A549 (cell line): ENCODE measurements at regions of chr3 and their contacts with region 1.

Region 1: DNA sequence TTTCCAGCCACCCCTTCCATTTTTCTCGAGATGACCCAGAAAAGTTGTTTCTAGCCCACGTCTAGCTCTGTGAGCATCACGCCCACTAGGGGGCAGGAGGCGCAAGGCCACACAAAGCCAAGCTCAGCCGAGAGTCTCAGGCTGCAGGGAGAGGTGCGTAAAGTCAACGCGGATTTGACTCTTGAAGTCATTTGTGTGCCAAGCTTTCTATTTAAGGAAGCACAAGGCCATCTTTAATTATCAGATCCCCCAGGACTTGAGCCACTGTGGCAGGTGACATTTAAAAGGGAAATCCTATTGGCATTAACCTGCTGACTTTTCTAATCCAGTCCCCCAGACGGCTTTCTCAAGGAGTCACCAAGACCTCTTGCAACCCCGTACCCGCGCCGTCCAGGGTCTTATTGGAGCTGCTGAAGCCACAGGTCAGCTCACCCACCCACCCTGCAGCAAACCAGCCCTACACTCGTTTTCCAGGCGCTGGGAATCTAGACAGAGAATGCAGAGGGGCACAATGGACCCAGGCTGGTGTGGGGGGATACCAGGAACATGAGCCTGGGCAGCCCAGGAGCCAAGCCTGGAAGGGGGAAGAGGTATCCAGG is 62.1 kb downstream of the CAPN7 start:
- DNase-seq: peak; percentile 80 to 87
- ATAC-seq: peak; percentile 70 to 86
- H3K4me3 ChIP-seq: no peak overlapping the region
- H3K27ac ChIP-seq: peak overlapping the region in 1 of 2 experiments; percentile 85; a peak in 3 of 6 replicates
- H3K4me1 ChIP-seq: peaks cover 21% of the 10 kb centered on the region
- CTCF ChIP-seq: peak; percentile 94
- EP300 ChIP-seq: no peak
- POLR2A ChIP-seq: no peak
- RAD21 ChIP-seq: peak; percentile 96 to 98

Region 2: GRCh38 chr3:15108082-15108545 is 160.0 kb before region 1 on chr3:
- CTCF ChIA-PET with region 1: interaction called, 20 read pairs
- POLR2A ChIA-PET with region 1: no interaction called
- DNase-seq: peak; percentile 83 to 96
- ATAC-seq: peak; percentile 92 to 98
- H3K4me3 ChIP-seq: no peak overlapping the region
- H3K27ac ChIP-seq: no peak overlapping the region
- H3K4me1 ChIP-seq: no peaks in the 10 kb centered on the region
- CTCF ChIP-seq: peak; percentile 88
- EP300 ChIP-seq: no peak
- POLR2A ChIP-seq: no peak
- RAD21 ChIP-seq: peak; percentile 84

Region 3: GRCh38 chr3:15241341-15241740 is 26.8 kb before region 1 on chr3:
- CTCF ChIA-PET with region 1: interaction called, 18 read pairs
- POLR2A ChIA-PET with region 1: no interaction called
- DNase-seq: peak; percentile 28 to 32
- ATAC-seq: peak; percentile 73 to 83; a peak in 5 of 6 replicates
- H3K4me3 ChIP-seq: no peak overlapping the region
- H3K27ac ChIP-seq: no peak overlapping the region
- H3K4me1 ChIP-seq: no peaks in the 10 kb centered on the region
- CTCF ChIP-seq: peak; percentile 23; the same call in 1 of the 3 replicates
- EP300 ChIP-seq: no peak
- POLR2A ChIP-seq: no peak
- RAD21 ChIP-seq: peak in 1 of 2 experiments; percentile 40; a peak in 2 of 5 replicates

Region 4: DNA sequence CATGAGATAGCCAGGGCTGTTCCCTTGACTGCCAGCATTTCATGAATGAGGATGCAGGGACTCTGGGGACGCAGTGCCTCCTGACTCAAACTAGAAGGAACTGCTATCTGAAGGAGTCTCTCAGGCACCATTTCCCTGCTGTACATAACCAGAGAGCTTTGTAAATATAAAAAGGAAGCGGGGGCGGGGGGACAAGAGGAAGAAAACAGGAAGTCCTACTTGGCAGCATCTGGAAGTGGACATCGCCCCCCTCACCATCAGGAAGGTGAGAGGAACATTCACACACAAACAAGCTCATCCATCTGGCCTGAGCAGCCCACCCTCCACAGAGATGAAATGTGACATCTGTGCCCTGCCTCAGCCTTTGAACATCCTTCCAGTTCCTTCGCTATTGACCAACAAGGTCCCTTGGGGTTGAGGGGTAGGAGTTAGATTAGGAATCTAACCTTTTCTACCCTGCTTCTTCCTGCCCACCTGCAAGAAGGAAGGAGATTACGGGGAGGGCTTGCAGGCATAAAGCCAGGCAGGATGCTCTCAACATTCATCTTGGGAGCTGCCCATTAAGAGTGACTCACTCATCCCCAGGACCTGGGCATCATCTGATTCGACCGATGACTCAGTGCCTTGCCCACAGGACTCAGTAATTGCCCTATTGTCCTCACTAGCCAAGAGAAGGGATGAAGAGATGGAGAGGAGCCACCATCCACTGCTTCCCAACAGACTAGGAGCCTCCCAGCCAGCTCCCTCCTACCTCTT is 32.4 kb after region 1 on chr3:
- CTCF ChIA-PET with region 1: interaction called, 13 read pairs
- POLR2A ChIA-PET with region 1: no interaction called
- DNase-seq: peak; percentile 67 to 73
- ATAC-seq: peak; percentile 91 to 93
- H3K4me3 ChIP-seq: no peak overlapping the region
- H3K27ac ChIP-seq: peak overlapping the region in 1 of 2 experiments; percentile 59; a peak in 4 of 6 replicates
- H3K4me1 ChIP-seq: peaks cover 17% of the 10 kb centered on the region
- CTCF ChIP-seq: no peak
- EP300 ChIP-seq: no peak
- POLR2A ChIP-seq: no peak
- RAD21 ChIP-seq: no peak

Region 5: GRCh38 chr3:15332405-15333098 is 64.4 kb after region 1 on chr3 and contains the start of gene SH3BP5:
- CTCF ChIA-PET with region 1: interaction called, 89 read pairs
- POLR2A ChIA-PET with region 1: interaction called, 3 read pairs
- DNase-seq: peak; percentile 68 to 81
- ATAC-seq: peak; percentile 95 to 97
- H3K4me3 ChIP-seq: peak within 1 kb of the TSS; percentile 75
- H3K27ac ChIP-seq: peak within 1 kb of the TSS; percentile 68 to 87
- H3K4me1 ChIP-seq: peaks cover 11% of the 10 kb centered on the region; the same call in 2 of the 3 replicates
- CTCF ChIP-seq: peak; percentile 44
- EP300 ChIP-seq: no peak
- POLR2A ChIP-seq: peak; percentile 61
- RAD21 ChIP-seq: peak; percentile 19 to 60; a peak in 4 of 5 replicates
- polyA plus RNA-seq, gene SH3BP5: 12.6 and 16.0 TPM in 2 replicates

Region 6: DNA sequence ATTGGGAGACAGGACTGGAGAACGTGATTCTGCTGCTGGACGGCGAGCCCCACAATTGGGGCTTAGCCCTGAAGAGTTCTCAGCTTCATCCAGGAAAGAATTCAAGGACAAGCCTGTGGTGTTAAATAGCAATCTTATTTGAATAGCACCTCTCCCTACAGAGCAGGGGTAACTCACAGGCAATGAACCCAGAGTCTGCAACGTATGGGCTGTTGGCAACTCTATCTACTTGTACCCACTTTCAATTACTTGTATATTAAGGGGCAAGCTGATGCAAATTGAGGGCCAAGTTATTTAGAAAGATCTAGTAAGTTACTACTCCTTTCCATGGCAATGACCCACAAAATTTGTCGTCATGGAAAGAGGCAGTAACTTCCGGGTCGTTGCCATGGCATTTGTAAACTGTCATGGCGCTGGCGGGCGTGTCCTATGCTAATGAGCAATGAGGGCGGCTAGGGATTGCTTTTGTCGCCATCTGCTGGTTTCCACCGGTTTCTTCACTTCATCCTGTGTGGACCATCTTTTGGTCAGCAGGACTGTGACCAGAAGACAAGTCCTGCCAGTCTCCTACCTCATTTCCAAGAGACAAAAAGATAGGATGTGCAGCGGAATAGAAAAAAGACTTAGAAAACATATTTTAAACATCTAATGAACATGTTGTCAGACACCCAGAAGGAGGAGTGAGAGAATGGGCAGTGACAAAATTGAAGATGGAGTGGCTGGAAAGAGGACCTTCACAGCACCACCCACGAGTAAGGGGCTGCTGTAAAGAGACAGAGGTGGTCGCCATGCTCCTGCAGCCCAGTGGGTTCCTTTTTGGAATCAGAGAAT is 110.0 kb after region 1 on chr3:
- CTCF ChIA-PET with region 1: interaction called, 145 read pairs
- POLR2A ChIA-PET with region 1: no interaction called
- DNase-seq: peak; percentile 46 to 94
- ATAC-seq: peak; percentile 98 to 99
- H3K4me3 ChIP-seq: no peak overlapping the region
- H3K27ac ChIP-seq: peak overlapping the region; percentile 37 to 82; a peak in 5 of 6 replicates
- H3K4me1 ChIP-seq: no peaks in the 10 kb centered on the region
- CTCF ChIP-seq: peak; percentile 89
- EP300 ChIP-seq: no peak
- POLR2A ChIP-seq: no peak
- RAD21 ChIP-seq: peak; percentile 89 to 91

Region 7: GRCh38 chr3:15405448-15406050 is 137.4 kb after region 1 on chr3:
- CTCF ChIA-PET with region 1: interaction called, 175 read pairs
- POLR2A ChIA-PET with region 1: interaction called, 5 read pairs
- DNase-seq: peak; percentile 69 to 71
- ATAC-seq: peak; percentile 73 to 90; a peak in 5 of 6 replicates
- H3K4me3 ChIP-seq: no peak overlapping the region
- H3K27ac ChIP-seq: no peak overlapping the region
- H3K4me1 ChIP-seq: no peaks in the 10 kb centered on the region
- CTCF ChIP-seq: peak; percentile 78
- EP300 ChIP-seq: no peak
- POLR2A ChIP-seq: no peak
- RAD21 ChIP-seq: peak; percentile 62 to 68

Region 8: DNA sequence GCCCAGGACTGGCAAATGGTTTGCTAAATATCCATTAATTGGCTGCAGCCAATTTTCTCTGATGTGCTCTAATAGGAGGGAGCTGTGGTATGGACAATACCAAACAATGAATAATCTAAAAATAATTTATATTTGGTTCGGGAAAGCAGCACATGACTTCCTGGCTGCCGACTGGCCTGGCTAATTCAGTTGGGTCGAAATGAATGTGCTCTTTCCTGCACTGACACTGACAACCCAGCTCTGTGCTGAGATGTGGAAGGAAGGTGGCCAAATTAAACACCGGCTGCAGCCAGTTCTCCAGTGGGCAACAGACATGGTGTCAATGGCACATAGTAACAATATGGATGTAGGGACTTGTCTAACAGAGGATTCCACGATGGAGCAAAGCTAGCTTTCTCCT is 274.5 kb after region 1 on chr3:
- CTCF ChIA-PET with region 1: no interaction called
- POLR2A ChIA-PET with region 1: no interaction called
- DNase-seq: no peak
- ATAC-seq: no peak
- H3K4me3 ChIP-seq: no peak overlapping the region
- H3K27ac ChIP-seq: no peak overlapping the region
- H3K4me1 ChIP-seq: no peaks in the 10 kb centered on the region
- CTCF ChIP-seq: no peak
- EP300 ChIP-seq: no peak
- POLR2A ChIP-seq: no peak
- RAD21 ChIP-seq: no peak